BJ (cell line): ENCODE measurements at regions of chr3 and their contacts with region 1.

Region 1: GRCh38 chr3:101709126-101709525 is 15.3 kb upstream of the CEP97 start:
- DNase-seq: no peak
- H3K4me3 ChIP-seq: no peak overlapping the region
- H3K27me3 ChIP-seq: no peaks in the 10 kb centered on the region
- CTCF ChIP-seq: no peak

Region 2: DNA sequence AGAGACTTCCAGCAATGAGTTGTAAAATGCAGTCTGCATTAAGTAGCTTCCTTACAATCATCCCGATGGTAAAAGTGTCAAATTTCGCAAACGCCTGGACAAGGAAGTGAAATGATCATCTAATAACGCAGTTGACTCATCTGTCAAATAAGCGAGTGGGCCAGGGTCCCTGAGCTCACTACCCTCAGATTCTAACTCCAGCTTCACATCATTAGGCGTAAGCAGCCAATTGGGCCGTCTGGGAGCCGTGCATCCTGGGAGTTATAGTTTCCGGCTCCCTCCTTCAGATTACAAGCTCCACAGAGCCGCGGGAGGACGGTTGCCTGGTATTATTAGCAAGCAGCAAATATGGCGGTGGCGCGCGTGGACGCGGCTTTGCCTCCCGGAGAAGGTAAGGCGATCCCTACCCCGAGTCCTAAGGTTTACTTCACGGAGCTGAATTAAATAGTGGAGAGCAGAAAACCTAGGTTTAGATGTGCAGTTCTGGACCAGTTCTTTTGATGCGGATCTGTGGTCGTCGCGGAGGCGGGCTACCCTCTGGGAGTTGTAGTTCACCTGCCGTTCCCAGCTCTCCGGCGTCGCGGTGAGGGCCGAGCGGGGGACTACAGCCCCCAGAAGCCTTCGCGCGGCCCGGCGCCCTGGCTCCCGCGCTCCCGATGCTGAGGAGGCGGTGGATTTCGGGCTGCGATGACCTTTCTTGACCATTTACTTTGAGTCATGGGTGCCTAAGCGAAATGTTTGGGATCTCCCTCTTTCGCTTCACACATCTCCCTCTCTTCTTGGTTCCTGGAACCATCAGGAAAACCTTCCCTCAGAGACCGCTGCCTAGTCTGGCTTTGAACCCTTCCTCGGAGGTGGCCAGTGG is 15.4 kb after region 1 on chr3 and contains the start of gene CEP97:
- CTCF ChIA-PET with region 1: interaction called, 20 read pairs
- POLR2A ChIA-PET with region 1: no interaction called
- DNase-seq: peak; percentile 51
- H3K4me3 ChIP-seq: peak within 1 kb of the TSS; percentile 68
- H3K27me3 ChIP-seq: no peaks in the 10 kb centered on the region
- CTCF ChIP-seq: no peak
- polyA plus RNA-seq, gene CEP97: 1.2 and 2.5 TPM in 2 replicates

Region 3: GRCh38 chr3:101836652-101837598 is 127.8 kb after region 1 on chr3:
- CTCF ChIA-PET with region 1: no interaction called
- POLR2A ChIA-PET with region 1: no interaction called
- DNase-seq: peak; percentile 54
- H3K4me3 ChIP-seq: no peak overlapping the region
- H3K27me3 ChIP-seq: no peaks in the 10 kb centered on the region
- CTCF ChIP-seq: no peak